ENCODE measurements at regions of chr16 and their contacts with region 1.

Region 1: DNA sequence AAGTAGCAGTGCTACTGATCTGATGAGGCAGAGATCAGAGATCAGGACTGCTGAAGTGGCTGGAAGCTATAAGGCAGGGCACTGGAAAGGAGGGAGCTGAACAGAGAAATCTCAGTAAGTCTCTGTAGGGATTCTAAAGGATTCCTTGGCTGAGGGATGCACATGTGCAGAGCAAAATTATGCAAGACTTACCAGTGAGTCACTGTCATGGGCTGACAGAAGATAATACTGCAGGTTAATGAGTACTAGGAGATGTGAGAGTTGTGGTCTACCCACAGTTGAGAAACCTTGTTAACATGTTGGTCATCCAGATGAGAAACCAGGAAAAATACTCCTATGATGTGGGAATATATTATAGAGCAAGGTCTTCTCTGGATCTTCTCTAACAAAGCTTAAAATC is 378.1 kb downstream of the HAPSTR1 start:
- DNase-seq: no peak
- ATAC-seq: no peak
- H3K4me3 ChIP-seq: no peak overlapping the region
- H3K27ac ChIP-seq: no peak overlapping the region
- H3K4me1 ChIP-seq: no peaks in the 10 kb centered on the region
- H3K27me3 ChIP-seq: peaks cover 0 to 3% (median 0%) of the 10 kb centered on the region in 9 donors
- CTCF ChIP-seq: no peak
- POLR2A ChIP-seq: no peak

Region 2: GRCh38 chr16:9813665-9814064 is 344.2 kb after region 1 on chr16:
- intact Hi-C with region 1: loop called in 1 of 10 experiments (anchors 5 kb)
- DNase-seq: no peak
- ATAC-seq: no peak
- H3K4me3 ChIP-seq: no peak overlapping the region
- H3K27ac ChIP-seq: no peak overlapping the region
- H3K4me1 ChIP-seq: no peaks in the 10 kb centered on the region
- H3K27me3 ChIP-seq: peaks cover 0 to 2% (median 0%) of the 10 kb centered on the region in 9 donors
- CTCF ChIP-seq: no peak
- POLR2A ChIP-seq: no peak

Measured in heart left ventricle (tissue), 16 donors.